ENCODE measurements at regions of chr11 and their contacts with region 1.

Region 1: GRCh38 chr11:1694064-1694845 is 2.7 kb upstream of the KRTAP5-6 start:
- DNase-seq: peak; percentile 45 to 75
- H3K4me3 ChIP-seq: no peak overlapping the region; the same call in 1 of the 2 replicates
- H3K27ac ChIP-seq: no peak overlapping the region
- H3K4me1 ChIP-seq: peaks cover 11% of the 10 kb centered on the region
- H3K27me3 ChIP-seq: peaks cover 7% of the 10 kb centered on the region; the same call in 1 of the 2 replicates
- CTCF ChIP-seq: peak; percentile 85

Region 2: DNA sequence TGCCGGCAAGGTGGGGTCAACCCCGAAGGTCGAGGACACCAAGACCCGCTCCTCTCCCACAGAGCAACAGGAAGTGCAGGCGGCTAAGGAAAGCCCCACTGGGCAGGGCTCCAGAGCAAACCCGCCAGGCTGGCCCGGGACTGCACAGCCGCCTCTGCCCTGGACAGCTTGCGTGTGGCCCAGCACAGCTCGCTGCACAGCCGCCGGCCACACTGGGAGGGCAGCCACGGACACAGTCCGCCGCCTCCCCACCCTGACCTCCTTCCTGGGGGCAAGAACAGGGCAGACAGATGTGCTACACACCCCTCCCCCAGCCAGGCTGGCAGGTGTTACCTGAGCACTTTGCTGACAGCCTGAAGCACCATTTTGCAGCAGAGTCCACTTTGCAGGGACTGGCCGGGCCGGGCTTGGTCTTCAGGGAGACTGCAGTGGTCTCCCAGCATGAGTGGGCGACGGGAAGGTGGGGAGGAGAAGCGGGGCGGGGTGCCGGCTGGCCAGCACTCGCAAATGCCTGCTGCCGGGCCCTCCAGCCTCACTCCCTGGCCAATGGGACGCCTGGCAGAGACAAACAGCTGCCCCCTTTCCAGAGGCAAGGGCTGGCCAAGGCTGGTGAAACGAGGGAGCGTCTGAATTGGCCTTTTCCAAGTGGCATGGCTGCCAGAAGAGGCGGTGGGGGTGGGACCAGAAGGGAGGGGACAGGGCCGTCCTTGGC is 208.0 kb before region 1 on chr11 and contains the start of gene MOB2:
- CTCF ChIA-PET with region 1: no interaction called
- POLR2A ChIA-PET with region 1: no interaction called
- intact Hi-C with region 1: no loop called
- DNase-seq: peak in 1 of 2 experiments; percentile 67
- H3K4me3 ChIP-seq: no peak within 1 kb of the TSS
- H3K27ac ChIP-seq: no peak within 1 kb of the TSS
- H3K4me1 ChIP-seq: no peaks in the 10 kb centered on the region
- H3K27me3 ChIP-seq: no peaks in the 10 kb centered on the region
- CTCF ChIP-seq: no peak
- total RNA-seq, gene MOB2: 19.1 and 21.8 TPM in 2 replicates

Region 3: GRCh38 chr11:1652771-1653540 is 41.3 kb before region 1 on chr11:
- CTCF ChIA-PET with region 1: no interaction called
- POLR2A ChIA-PET with region 1: no interaction called
- intact Hi-C with region 1: loop called (anchors 5 kb)
- DNase-seq: peak in 1 of 2 experiments; percentile 61
- H3K4me3 ChIP-seq: no peak overlapping the region
- H3K27ac ChIP-seq: no peak overlapping the region
- H3K4me1 ChIP-seq: no peaks in the 10 kb centered on the region
- H3K27me3 ChIP-seq: peaks cover 39% of the 10 kb centered on the region
- CTCF ChIP-seq: peak; percentile 92

Region 4: GRCh38 chr11:1876361-1877063 is 182.3 kb after region 1 on chr11:
- CTCF ChIA-PET with region 1: no interaction called
- POLR2A ChIA-PET with region 1: no interaction called
- intact Hi-C with region 1: loop called (anchors 5 kb)
- DNase-seq: no peak
- H3K4me3 ChIP-seq: no peak overlapping the region
- H3K27ac ChIP-seq: no peak overlapping the region
- H3K4me1 ChIP-seq: no peaks in the 10 kb centered on the region
- H3K27me3 ChIP-seq: no peaks in the 10 kb centered on the region
- CTCF ChIP-seq: peak; percentile 52; the same call in 1 of the 2 replicates